ENCODE measurements at regions of chr4 and their contacts with region 1.

Region 1: DNA sequence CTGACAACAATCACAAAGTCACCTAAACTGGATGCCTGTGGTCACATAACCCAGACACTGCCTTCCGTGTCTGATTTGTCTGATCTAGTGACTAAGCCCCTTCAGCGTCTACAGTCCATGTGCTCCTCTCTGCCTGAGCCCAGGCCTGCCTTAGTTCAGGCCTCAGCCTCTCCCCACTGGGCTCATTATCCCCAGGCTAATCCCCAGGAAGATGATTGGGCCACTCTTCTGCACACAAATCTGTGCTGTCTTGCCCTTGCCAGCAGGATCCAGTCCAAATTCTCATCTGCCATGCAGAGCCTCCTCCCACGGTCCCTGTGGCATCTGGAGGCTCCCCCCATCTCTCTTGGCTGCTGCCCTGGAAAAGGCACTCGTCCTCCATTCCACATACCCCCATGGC is 96.5 kb downstream of the SLC2A9 start:
- DNase-seq: peak; percentile 91
- H3K4me3 ChIP-seq: no peak overlapping the region
- H3K27ac ChIP-seq: no peak overlapping the region
- H3K4me1 ChIP-seq: peaks cover 26% of the 10 kb centered on the region
- H3K27me3 ChIP-seq: no peaks in the 10 kb centered on the region
- CTCF ChIP-seq: no peak

Region 2: DNA sequence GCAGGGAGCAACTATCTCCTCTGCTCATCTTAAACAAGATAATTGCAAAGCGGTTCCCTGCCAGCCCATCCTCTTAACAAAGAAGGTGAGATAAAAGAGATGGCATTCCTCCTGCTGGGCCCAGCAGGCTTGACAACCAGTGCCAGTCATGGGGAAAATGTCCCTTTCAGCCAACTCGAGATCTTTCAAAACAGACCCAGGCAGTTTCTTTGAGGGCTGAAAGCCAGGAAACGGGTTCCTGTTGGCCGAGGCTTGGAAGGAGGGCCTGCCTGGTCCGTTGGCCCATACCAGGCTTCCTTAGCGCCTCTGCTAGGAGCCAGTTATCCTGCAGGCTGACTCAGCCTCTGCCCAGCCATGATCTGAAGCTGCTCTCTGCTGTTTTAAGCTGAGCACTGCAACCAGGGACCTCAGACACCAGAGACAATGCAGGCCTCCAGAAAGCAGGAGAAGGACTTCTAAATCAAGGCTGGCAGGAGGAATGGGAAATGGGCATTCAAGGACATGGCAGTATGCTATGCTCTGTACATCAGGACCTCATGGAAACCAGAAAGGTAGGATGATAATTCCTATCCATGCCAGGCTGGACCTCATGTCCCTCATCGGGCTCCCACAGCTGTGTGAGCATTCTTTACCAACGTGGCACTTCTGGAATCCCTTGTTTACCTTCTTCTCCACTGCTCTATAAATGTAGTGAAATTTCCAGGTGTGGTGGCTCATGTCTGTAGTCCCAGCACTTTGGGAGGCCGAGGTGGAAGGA is 139.0 kb after region 1 on chr4:
- CTCF ChIA-PET with region 1: no interaction called
- dilution Hi-C with region 1: no loop called
- in situ Hi-C with region 1: no loop called
- intact Hi-C with region 1: loop called (anchors 10 kb)
- DNase-seq: peak; percentile 70
- H3K4me3 ChIP-seq: no peak overlapping the region
- H3K27ac ChIP-seq: no peak overlapping the region
- H3K4me1 ChIP-seq: peaks cover 9% of the 10 kb centered on the region
- H3K27me3 ChIP-seq: no peaks in the 10 kb centered on the region
- CTCF ChIP-seq: peak; percentile 95

Measured in mammary epithelial cell (primary cell).